ENCODE measurements at regions of chr15 and their contacts with region 1.

Region 1: DNA sequence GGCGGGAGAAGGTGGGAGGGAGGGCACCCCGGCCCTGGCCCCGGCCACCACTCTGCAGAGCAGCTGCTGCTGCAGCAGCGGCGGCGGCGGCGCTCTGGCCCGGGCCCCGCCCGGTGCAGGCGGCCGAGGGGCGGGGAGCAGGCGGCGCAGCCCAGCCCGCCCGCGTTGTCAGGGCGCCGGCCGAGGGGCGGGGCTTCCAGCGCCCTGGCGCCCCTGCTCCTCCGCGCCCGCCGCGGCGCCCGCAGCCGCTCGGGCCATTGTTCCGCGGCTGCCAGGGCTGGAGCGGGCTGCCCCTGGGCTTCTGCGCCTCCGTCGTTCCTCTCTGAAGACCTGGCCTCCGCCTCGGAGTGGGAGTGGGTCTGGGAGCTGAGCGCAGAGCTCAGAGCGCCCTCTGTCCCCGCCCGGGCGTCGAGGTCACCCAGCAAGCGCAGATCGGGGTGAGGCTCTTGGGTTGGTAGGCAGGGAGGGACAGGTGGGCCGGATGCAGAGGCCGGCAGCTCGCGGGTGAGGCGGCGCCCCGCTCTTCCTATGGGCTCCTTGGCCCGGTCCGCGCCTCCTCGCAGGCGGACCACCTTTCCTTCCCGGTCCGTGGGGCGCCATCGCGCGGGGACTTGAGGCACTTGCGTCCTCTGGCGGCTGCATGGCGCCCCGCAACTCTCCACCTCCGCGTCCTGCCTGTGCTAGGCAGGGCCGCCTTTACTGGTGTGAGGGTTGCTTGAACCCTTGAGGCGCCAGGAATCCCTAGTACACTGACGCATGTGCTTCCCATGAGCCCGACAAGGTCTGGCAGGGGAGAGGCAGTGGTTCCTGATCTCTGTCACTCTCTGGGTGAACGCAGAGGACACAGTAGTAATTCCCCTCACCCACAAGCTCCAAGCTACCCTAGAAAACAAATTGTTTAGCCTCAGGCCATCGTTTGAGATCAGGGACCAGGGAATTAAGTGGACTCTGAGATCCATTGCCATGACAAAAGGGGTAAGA is at the start of gene LPCAT4:
- DNase-seq: peak; percentile 94
- H3K4me3 Mint-ChIP-seq: peak within 1 kb of the TSS; percentile 97
- H3K27ac Mint-ChIP-seq: peak within 1 kb of the TSS; percentile 98
- H3K4me1 Mint-ChIP-seq: peaks cover 54% of the 10 kb centered on the region
- H3K27me3 Mint-ChIP-seq: no peaks in the 10 kb centered on the region
- total RNA-seq, gene LPCAT4: 98.2 to 101 TPM

Region 2: GRCh38 chr15:34018021-34018645 is 349.3 kb before region 1 on chr15:
- CTCF ChIA-PET with region 1: no interaction called
- POLR2A ChIA-PET with region 1: no interaction called
- DNase-seq: peak; percentile 71
- H3K4me3 Mint-ChIP-seq: peak overlapping the region; percentile 18
- H3K27ac Mint-ChIP-seq: peak overlapping the region; percentile 71
- H3K4me1 Mint-ChIP-seq: peaks cover 21% of the 10 kb centered on the region
- H3K27me3 Mint-ChIP-seq: peaks cover 3% of the 10 kb centered on the region

Region 3: GRCh38 chr15:34337557-34338306 is 29.7 kb before region 1 on chr15 and contains the start of gene SLC12A6:
- CTCF ChIA-PET with region 1: interaction called, 31 read pairs
- POLR2A ChIA-PET with region 1: interaction called, 5 read pairs
- DNase-seq: peak; percentile 90
- H3K4me3 Mint-ChIP-seq: peak within 1 kb of the TSS; percentile 95
- H3K27ac Mint-ChIP-seq: peak within 1 kb of the TSS; percentile 99
- H3K4me1 Mint-ChIP-seq: peaks cover 59% of the 10 kb centered on the region
- H3K27me3 Mint-ChIP-seq: no peaks in the 10 kb centered on the region
- total RNA-seq, gene SLC12A6: 32.7 to 36.7 TPM

Region 4: GRCh38 chr15:34342737-34343575 is 24.4 kb before region 1 on chr15 and contains the starts of genes NOP10 and NUTM1:
- CTCF ChIA-PET with region 1: interaction called, 31 read pairs
- POLR2A ChIA-PET with region 1: interaction called, 5 read pairs
- DNase-seq: peak; percentile 96
- H3K4me3 Mint-ChIP-seq: no peak within 1 kb of the TSS
- H3K27ac Mint-ChIP-seq: no peak within 1 kb of the TSS
- H3K4me1 Mint-ChIP-seq: peaks cover 23% of the 10 kb centered on the region
- H3K27me3 Mint-ChIP-seq: no peaks in the 10 kb centered on the region
- total RNA-seq, gene NOP10: 162 to 207 TPM
- total RNA-seq, gene NUTM1: not detected

Measured in activated CD4-positive, alpha-beta T cell treated with anti-CD3 and anti-CD28 coated beads, Interleukin-2, amount 10 ng/mL, durations not matched to agents 7 days and 5 days (primary cell).